ENCODE measurements at regions of chr11 and their contacts with region 1.

Region 1: DNA sequence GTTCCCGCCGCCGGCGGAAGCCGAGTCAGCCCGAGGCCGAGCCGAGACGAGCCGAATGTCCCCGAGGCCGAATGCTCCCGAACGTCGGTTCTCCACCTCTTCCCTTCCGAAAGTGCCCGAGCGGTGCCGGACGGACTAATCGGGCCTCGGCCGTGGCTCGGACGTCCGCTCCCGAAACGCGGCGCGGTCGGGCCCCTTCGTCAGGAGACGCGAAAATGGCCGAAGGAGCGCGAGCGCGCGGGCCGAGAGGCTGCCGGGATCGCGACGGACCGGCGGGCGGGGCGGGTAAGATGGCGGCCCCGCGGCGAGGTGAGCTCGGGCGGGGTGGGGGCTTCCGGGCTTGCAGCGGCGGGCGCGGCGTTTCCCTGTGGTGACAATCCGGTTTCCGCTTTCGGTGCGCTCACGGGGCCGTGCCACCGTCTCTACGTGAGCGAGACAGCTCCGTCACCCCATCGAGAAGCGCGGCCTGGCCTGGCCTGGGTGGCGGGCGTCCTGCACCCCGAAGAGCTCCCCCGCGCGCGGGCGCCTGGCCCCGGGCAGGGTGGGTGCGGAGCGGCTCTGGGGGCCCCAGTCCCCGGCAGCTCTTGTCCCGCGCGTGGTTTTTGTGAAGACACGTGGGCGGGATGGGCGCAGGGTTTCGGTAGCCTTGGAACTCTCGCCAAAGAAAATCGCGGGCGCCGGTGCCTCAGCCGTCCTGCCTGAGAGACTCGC is at the start of gene TMEM80:
- DNase-seq: peak; percentile 99
- H3K4me3 Mint-ChIP-seq: peak within 1 kb of the TSS; percentile 81
- H3K27ac Mint-ChIP-seq: peak within 1 kb of the TSS; percentile 98
- H3K4me1 Mint-ChIP-seq: peaks cover 33% of the 10 kb centered on the region
- H3K27me3 Mint-ChIP-seq: no peaks in the 10 kb centered on the region
- CTCF ChIP-seq: no peak
- total RNA-seq, gene TMEM80: 12.2 and 12.8 TPM in 2 replicates

Region 2: GRCh38 chr11:706957-707816 is 11.5 kb after region 1 on chr11:
- CTCF ChIA-PET with region 1: interaction called, 7 read pairs
- POLR2A ChIA-PET with region 1: interaction called, 118 read pairs
- intact Hi-C with region 1: no loop called
- DNase-seq: peak; percentile 53
- H3K4me3 Mint-ChIP-seq: peak overlapping the region; percentile 86
- H3K27ac Mint-ChIP-seq: peak overlapping the region; percentile 91
- H3K4me1 Mint-ChIP-seq: peaks cover 25% of the 10 kb centered on the region
- H3K27me3 Mint-ChIP-seq: no peaks in the 10 kb centered on the region
- CTCF ChIP-seq: no peak

Region 3: GRCh38 chr11:777288-778255 is 81.9 kb after region 1 on chr11 and contains the start of gene GATD1:
- CTCF ChIA-PET with region 1: no interaction called
- POLR2A ChIA-PET with region 1: interaction called, 11 read pairs
- intact Hi-C with region 1: no loop called
- DNase-seq: peak; percentile 84
- H3K4me3 Mint-ChIP-seq: peak within 1 kb of the TSS; percentile 85
- H3K27ac Mint-ChIP-seq: peak within 1 kb of the TSS; percentile 81
- H3K4me1 Mint-ChIP-seq: peaks cover 11% of the 10 kb centered on the region
- H3K27me3 Mint-ChIP-seq: no peaks in the 10 kb centered on the region
- CTCF ChIP-seq: no peak
- total RNA-seq, gene GATD1: 54.6 and 67.7 TPM in 2 replicates

Measured in MCF 10A (cell line).